Mammary epithelial cell (primary cell): ENCODE measurements at regions of chr17 and their contacts with region 1.

Region 1: GRCh38 chr17:82859431-82860403 is 19.9 kb upstream of the ZNF750 start:
- DNase-seq: no peak
- H3K4me3 ChIP-seq: no peak overlapping the region
- H3K27ac ChIP-seq: no peak overlapping the region
- H3K4me1 ChIP-seq: peaks cover 30% of the 10 kb centered on the region
- H3K27me3 ChIP-seq: no peaks in the 10 kb centered on the region
- CTCF ChIP-seq: no peak

Region 2: DNA sequence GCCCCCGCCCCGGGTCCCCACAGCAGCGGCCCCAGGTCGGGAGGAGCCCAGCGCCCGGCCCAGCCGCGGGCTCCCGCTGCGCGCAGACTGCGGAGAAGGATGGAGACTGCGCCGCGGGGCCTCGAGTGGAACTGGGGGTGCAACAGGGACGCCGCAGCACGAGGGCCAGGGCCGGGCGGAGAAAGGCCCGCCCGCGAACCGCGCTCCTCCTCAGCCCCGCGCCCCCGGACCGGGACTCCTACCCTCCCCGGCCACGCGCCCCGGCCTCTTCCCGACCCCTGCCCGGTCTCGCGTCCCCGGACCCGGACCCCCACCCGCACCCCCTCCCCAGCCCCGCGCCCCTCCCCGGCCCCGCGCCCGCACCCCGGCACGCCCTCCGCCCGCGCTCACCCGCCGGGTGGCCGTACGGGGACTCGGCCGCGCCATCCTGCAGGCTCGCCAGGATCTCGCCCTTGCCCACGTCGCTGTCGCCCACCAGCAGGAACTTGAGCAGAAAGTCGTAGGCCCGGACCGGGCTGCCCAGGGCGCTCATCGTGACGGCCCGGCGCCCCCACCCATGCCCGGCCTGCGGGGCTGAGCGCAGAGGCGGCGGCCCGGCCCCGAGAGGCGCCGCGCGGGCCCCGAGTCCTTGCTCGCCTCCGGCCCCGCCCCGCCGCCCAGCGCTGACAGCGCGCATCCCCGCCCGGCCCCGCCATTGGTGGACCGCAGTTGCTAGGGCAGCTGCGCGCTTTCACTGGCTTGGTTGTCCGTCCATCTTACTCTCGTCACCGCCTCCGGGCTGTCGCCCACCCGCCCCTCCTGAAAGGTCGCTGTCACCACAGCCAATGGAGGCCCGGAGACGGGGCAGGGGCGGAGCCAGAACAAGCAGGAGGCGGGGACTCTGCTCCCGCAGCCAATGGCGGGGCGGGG is 161.4 kb before region 1 on chr17 and contains the start of gene RAB40B:
- CTCF ChIA-PET with region 1: no interaction called
- dilution Hi-C with region 1: no loop called
- in situ Hi-C with region 1: no loop called
- intact Hi-C with region 1: no loop called
- DNase-seq: peak; percentile 97
- H3K4me3 ChIP-seq: peak within 1 kb of the TSS; percentile 53 to 79 (median 73)
- H3K27ac ChIP-seq: no peak within 1 kb of the TSS
- H3K4me1 ChIP-seq: peaks cover 31% of the 10 kb centered on the region
- H3K27me3 ChIP-seq: no peaks in the 10 kb centered on the region
- CTCF ChIP-seq: no peak
- total RNA-seq, gene RAB40B: 13.3 to 17.8 TPM

Region 3: DNA sequence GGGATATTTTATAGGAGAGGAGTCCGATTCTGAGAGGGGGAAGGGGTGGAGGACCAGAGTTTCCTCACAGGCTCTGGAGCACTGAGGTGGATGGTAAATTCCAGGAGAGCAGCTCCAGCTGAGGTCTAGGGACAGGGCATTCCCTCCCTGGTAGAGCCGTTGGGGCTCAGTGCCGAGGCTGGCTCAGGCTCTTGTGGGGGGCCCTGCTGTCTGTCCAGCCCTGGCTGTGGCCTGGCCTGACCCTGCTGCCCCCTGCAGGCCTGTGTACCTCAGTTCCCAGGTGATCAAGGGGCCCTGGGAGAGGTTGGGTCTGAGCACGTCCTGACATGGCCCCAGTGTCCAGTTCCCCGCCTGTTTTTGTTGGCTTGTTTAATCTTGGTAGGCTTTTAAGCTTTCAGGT is 36.7 kb before region 1 on chr17:
- CTCF ChIA-PET with region 1: no interaction called
- dilution Hi-C with region 1: no loop called
- in situ Hi-C with region 1: no loop called
- intact Hi-C with region 1: no loop called
- DNase-seq: no peak
- H3K4me3 ChIP-seq: no peak overlapping the region
- H3K27ac ChIP-seq: no peak overlapping the region
- H3K4me1 ChIP-seq: peaks cover 6% of the 10 kb centered on the region
- H3K27me3 ChIP-seq: no peaks in the 10 kb centered on the region
- CTCF ChIP-seq: no peak

Region 4: DNA sequence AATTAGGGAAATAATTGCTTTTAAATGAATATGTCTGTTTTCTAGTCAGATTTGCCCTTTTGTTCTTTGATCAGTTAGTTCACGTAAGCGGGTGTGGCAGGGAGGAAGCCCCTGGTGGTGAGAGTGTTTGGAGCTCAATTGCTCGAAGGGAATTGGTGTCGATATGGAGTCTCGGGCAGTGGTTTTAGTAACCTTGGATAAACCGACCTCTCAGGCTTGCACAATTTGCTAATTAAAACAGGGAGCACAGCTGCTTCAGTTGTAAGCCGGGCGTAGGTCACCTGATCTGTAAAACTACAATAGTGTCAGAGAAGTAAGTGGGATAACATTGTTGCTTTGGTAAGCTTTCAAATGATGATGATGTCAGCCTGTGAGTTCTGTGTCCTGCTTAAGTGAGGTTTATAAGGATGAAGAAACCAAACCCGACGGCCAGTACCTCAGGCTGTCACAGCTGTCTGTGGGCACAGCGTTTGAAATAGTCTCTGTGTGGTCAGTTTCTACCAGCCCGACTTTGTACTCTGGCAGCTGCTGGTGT is 22.8 kb before region 1 on chr17:
- CTCF ChIA-PET with region 1: no interaction called
- dilution Hi-C with region 1: no loop called
- in situ Hi-C with region 1: no loop called
- intact Hi-C with region 1: loop called (anchors 1 kb)
- DNase-seq: no peak
- H3K4me3 ChIP-seq: no peak overlapping the region
- H3K27ac ChIP-seq: peak overlapping the region; percentile 100
- H3K4me1 ChIP-seq: peaks cover 38% of the 10 kb centered on the region
- H3K27me3 ChIP-seq: no peaks in the 10 kb centered on the region
- CTCF ChIP-seq: peak; percentile 2 to 14

Region 5: GRCh38 chr17:82931699-82932517 is 72.2 kb after region 1 on chr17:
- CTCF ChIA-PET with region 1: no interaction called
- dilution Hi-C with region 1: no loop called
- in situ Hi-C with region 1: no loop called
- intact Hi-C with region 1: no loop called
- DNase-seq: peak; percentile 81
- H3K4me3 ChIP-seq: no peak overlapping the region
- H3K27ac ChIP-seq: no peak overlapping the region
- H3K4me1 ChIP-seq: peaks cover 12% of the 10 kb centered on the region
- H3K27me3 ChIP-seq: no peaks in the 10 kb centered on the region
- CTCF ChIP-seq: no peak

Region 6: DNA sequence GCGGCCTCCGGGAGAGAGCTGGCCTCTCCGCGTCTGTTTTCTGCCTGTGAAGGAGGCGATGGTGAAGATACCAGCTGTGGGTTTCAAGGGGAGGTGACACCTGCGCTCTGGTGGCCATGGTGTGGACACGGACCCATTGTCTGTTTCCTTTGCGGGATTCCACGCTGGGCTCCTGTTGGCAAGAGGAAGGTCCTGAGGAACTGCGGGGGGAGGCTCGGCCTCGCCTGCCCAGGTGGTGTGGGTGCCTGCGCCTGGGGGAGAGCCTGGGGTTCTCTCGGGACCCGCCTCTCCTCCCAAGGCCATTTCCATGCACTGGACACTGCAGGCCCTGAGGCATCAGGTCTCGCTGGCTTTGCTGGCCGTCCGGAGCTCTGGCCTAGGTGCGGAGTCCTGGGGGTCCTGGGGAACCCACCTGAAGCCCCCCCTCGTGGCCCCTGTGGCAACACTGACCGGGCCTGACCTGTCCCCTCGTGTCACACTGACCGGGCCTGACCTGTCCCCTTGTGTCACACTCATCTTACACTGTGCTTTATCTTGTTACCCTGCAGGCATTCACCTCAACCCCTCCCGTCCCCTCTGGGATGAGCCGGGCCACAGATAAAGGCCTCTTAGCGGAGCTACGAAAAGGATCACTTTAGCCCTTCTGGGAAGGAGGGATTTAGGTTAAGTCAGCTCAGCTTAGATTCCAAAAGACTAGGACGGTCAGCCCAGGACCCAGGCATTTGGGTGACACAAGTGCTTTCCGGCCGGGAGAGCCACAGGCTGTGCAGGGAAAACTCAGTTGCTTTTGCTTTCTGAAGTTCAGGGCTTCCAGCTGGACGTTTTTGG is 207.7 kb after region 1 on chr17:
- CTCF ChIA-PET with region 1: no interaction called
- dilution Hi-C with region 1: no loop called
- in situ Hi-C with region 1: no loop called
- intact Hi-C with region 1: no loop called
- DNase-seq: no peak
- H3K4me3 ChIP-seq: no peak overlapping the region
- H3K27ac ChIP-seq: no peak overlapping the region
- H3K4me1 ChIP-seq: peaks cover 6% of the 10 kb centered on the region
- H3K27me3 ChIP-seq: peaks cover under 1% of the 10 kb centered on the region
- CTCF ChIP-seq: no peak